Dendritic cell treated with granulocyte-macrophage colony-stimulating factor and Interleukin-4, amounts not matched to agents 40 ng/mL and 50 ng/mL, for 4 days (primary cell): ENCODE measurements at regions of chr10 and their contacts with region 1.

Region 1: DNA sequence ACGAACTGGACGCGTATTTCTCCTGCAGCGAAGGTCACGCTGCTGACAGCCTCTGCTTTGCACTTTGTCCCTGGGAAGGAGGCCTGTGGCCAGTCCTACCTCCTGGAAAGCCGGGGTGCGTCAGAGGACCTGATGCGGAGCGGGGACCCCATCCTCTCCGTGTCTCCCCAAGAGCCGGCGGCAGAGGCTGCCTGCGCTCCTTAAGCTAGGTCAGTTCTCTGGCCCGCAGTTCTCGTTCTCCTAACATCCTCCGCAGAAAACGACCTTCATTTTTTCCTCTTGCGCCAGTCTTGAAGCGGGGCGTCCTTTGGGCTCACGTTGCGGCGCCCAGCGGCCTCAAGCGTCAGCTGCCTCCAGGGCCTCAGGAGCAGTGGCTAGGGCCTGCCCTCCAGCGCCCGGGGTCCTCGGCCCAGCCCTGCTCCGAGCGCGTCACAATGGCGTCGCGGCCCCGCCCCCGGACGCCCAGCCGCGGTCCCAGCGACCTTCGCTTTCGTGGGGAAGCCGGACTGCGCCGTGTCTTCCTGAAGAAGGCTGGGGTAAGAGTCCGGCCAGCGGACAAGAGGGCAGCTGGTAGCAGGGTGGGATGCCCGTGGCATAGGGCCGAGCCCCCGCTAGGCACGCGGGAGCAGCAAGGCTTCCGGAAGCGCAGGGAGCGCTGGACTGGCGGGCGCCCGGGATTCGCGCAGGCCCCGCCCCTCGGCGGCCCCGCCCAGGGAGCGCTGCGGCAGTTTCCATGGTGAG is at the start of gene ZNF487:
- H3K4me3 Mint-ChIP-seq: peak within 1 kb of the TSS; percentile 95
- H3K27ac Mint-ChIP-seq: peak within 1 kb of the TSS; percentile 98
- H3K4me1 Mint-ChIP-seq: peaks cover 25% of the 10 kb centered on the region
- H3K27me3 Mint-ChIP-seq: no peaks in the 10 kb centered on the region

Region 2: DNA sequence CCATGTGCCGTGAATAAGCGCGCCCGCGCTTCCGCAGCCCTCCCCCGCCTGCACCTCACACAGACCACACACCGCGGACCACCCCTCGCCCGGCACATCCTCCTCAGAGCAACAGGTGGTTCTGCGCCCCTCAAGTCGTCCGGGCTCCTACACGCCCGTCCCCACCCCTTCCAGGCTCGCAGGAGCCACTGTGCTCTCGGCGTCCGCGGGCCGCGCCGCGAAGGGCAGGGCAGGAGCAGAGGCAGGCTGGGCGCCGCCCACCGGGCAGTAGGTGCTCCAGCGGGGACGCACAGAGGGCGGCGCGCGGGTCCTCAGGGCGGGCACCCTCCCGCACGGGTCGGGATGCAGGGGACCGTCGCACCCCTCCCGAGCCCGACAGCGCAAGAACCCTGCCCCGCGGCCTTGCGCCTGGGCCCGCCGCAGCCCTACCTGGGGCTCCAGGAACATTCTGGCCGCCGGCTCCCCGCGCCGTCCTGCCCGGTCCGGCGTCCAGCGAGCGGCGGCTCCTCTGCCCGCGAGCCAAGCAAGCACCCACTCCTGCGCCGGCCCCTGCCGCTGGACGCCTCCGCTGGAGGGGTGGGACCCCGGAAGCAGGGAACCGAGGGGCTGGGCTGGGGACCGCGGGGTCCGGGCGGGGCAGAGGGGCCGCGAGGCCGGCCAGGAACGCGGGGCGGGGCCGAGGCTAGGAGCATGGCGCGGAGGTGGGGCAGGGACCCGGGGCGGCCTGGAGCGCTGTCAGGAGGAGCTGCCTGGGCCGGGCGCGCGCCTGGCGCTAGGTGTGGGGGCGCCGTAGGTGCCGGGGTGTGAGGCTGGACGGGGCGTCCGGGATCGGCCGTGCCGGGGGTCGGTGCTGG is 207.1 kb before region 1 on chr10:
- intact Hi-C with region 1: no loop called
- H3K4me3 Mint-ChIP-seq: peak overlapping the region; percentile 50
- H3K27ac Mint-ChIP-seq: no peak overlapping the region
- H3K4me1 Mint-ChIP-seq: peaks cover 15% of the 10 kb centered on the region
- H3K27me3 Mint-ChIP-seq: peaks cover 52% of the 10 kb centered on the region

Region 3: DNA sequence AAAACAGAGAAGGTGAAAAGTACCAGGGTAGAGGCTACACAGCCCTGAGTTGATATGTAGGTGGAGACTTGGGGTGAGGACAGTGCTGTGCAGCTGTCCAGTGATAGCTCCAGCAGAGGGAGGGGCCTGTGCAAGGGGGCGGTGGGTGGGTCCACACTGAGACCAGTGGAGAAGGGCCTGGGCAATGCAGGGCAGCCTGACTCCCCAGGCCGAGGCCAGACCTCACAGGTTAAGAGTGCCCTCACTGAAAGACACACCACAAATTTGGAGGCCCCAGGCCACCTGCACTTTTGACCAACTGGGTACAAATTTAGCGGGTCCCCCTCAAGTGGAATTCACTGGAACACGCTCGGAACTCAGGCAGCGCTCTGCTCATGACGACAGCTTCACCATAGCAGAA is 163.0 kb before region 1 on chr10:
- intact Hi-C with region 1: no loop called
- H3K4me3 Mint-ChIP-seq: no peak overlapping the region
- H3K27ac Mint-ChIP-seq: no peak overlapping the region
- H3K4me1 Mint-ChIP-seq: no peaks in the 10 kb centered on the region
- H3K27me3 Mint-ChIP-seq: peaks cover 58% of the 10 kb centered on the region

Region 4: DNA sequence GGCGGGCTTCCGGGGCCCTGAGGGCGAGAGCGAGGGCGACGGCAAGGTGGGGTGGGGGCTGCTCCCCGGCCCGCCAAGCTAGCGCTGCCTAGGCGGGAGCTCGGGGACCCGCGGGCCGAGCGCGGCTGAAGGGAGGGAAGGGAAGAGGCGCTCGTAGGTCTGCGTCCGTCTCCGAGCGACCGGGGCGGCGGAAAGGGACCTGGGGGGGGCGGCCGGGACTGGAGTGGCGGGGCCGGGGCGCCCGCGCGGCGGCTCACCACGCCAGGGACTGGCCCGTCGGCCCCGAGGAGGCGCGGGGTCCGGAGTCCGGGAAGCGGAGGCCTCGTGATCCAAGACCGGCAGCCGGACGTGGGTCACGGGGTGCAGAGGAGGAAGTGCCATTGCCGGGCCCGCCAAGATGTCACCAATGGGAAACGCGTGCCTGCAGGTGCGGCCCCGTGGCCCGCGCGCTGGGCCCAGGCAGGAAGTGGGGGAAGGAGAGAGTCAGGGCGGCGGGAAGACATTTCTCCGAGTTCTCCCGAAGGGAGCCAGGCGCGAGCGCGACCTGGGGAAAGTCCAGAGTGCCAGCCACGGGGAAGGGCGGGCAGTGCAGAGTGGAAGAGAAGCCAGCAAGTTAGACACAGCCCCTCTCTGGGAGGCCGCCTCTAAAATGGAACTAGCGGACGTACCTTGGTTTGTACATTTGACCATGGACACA is 39.5 kb before region 1 on chr10:
- intact Hi-C with region 1: loop called (anchors 5 kb)
- H3K4me3 Mint-ChIP-seq: peak overlapping the region; percentile 82
- H3K27ac Mint-ChIP-seq: peak overlapping the region; percentile 83
- H3K4me1 Mint-ChIP-seq: peaks cover 83% of the 10 kb centered on the region
- H3K27me3 Mint-ChIP-seq: no peaks in the 10 kb centered on the region

Region 5: GRCh38 chr10:43407576-43408330 is 28.8 kb before region 1 on chr10:
- intact Hi-C with region 1: loop called (anchors 1 kb)
- H3K4me3 Mint-ChIP-seq: peak overlapping the region; percentile 88
- H3K27ac Mint-ChIP-seq: peak overlapping the region; percentile 98
- H3K4me1 Mint-ChIP-seq: peaks cover 50% of the 10 kb centered on the region
- H3K27me3 Mint-ChIP-seq: no peaks in the 10 kb centered on the region

Region 6: GRCh38 chr10:43420369-43421200 is 16.0 kb before region 1 on chr10:
- intact Hi-C with region 1: loop called (anchors 1 kb)
- H3K4me3 Mint-ChIP-seq: peak overlapping the region; percentile 89
- H3K27ac Mint-ChIP-seq: peak overlapping the region; percentile 100
- H3K4me1 Mint-ChIP-seq: peaks cover 36% of the 10 kb centered on the region
- H3K27me3 Mint-ChIP-seq: no peaks in the 10 kb centered on the region